Activated CD8-positive, alpha-beta memory T cell treated with anti-CD3 and anti-CD28 coated beads, Interleukin-2, amount 10 ng/mL, durations not matched to agents 7 days and 5 days (primary cell): ENCODE measurements at regions of chr12 and their contacts with region 1.

Region 1: DNA sequence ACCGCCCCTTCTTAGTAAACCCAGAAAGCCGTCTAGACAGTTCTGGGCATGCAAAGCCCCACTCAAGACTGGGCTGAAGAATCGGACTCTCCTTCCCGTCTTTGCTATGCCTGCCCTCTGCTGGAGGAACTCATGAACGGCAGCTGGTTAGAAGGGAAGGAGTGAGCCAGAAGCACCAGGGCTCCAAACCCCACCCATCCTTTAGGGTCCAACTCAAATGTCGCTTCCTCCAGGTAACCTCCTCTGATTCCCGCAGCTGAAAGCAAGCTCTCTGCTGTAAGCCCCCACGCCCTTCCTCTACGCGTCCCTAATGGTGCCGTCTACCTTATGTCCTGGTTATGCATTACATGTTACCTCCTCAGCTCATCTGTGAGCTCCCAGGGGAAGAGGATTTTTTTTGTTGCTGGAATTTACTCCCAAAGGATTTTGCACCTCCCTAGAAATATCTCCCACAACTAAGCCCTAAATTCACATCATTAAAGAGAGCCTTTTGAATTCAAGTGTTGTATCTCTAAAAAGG is 59.0 kb upstream of the SCN8A start:
- DNase-seq: peak; percentile 89
- ATAC-seq: peak; percentile 96
- H3K4me3 Mint-ChIP-seq: no peak overlapping the region
- H3K27ac Mint-ChIP-seq: no peak overlapping the region
- H3K4me1 Mint-ChIP-seq: peaks cover 7% of the 10 kb centered on the region
- H3K27me3 Mint-ChIP-seq: peaks cover 34% of the 10 kb centered on the region

Region 2: GRCh38 chr12:51368640-51369517 is 163.2 kb before region 1 on chr12:
- CTCF ChIA-PET with region 1: interaction called, 13 read pairs
- DNase-seq: peak; percentile 97
- ATAC-seq: peak; percentile 98
- H3K4me3 Mint-ChIP-seq: peak overlapping the region; percentile 28
- H3K27ac Mint-ChIP-seq: peak overlapping the region; percentile 83
- H3K4me1 Mint-ChIP-seq: peaks cover 58% of the 10 kb centered on the region
- H3K27me3 Mint-ChIP-seq: no peaks in the 10 kb centered on the region

Region 3: DNA sequence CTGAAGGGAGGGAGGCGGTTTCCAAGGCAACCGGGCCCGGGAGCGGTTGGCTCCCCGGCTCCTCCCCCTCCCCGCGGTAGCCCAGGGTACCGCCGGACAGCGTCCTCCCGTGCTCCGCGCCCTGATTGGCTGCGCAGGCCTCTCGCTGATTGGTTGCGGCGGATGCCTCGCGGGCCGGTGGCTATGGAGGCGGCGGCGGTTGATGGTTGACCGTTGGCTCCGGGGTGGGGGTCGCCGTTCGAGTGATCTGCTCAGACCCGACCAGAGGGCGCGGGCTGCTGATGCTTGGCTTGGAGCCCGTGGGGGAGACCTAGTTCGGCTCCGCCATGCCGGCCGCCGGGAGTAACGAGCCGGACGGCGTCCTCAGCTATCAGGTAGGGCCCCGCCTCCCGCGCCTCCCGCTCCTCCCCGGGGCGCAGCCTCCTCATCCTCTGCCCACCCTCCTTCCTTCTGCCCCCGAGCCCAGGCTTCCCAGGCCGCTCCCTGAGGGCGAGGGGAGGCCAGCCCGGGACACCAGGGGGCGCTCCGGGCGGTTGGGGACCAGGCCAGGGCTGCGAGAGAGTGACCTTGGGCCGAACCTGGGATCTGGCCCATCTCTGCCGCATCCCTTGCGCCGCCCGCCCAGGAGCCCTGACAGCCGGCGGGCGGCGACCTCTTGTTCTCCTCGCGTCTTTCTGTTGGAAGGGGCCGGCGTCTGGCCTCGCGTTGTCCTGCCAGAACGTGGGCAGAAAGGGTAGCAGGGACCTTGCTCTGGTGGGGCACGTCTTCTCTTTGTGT is 107.2 kb before region 1 on chr12 and contains the start of gene SLC4A8:
- CTCF ChIA-PET with region 1: interaction called, 136 read pairs
- DNase-seq: peak; percentile 91
- ATAC-seq: peak; percentile 94
- H3K4me3 Mint-ChIP-seq: peak within 1 kb of the TSS; percentile 76
- H3K27ac Mint-ChIP-seq: peak within 1 kb of the TSS; percentile 30
- H3K4me1 Mint-ChIP-seq: peaks cover 14% of the 10 kb centered on the region
- H3K27me3 Mint-ChIP-seq: peaks cover 6% of the 10 kb centered on the region
- total RNA-seq, gene SLC4A8: 9.1 to 9.2 TPM

Region 4: DNA sequence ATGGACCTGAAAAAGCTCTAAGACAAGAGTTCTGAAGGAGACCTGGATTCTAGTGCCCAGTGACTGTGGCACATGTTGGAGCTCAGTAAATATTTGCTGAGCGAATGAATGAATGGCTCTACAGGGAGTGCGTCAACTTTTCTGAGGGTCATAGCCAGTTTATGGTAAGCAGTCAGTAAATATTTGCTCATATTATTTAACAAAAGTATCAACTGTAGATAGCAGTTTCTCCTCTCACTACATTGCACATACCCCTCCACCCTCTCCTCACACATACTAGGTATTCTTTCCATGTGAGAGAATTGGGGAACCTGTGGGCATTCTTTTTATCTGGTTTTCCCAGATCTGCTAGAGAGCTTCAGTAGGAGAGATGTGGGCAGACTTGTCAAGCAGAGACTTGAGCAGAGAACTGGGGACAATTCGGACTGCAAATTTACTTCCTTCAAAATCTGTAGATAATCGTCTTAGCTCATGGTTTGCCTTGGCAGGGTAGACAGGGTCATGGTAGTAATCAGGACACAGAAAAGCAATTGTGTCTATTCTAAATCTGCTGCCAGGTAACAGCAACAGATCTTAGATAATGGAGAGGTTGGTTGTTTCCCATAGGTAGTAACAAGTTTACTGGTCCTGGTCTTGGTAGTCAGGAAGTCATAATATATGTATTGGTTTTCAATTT is 101.7 kb before region 1 on chr12:
- CTCF ChIA-PET with region 1: interaction called, 136 read pairs
- DNase-seq: no peak
- ATAC-seq: no peak
- H3K4me3 Mint-ChIP-seq: no peak overlapping the region
- H3K27ac Mint-ChIP-seq: no peak overlapping the region
- H3K4me1 Mint-ChIP-seq: peaks cover 5% of the 10 kb centered on the region
- H3K27me3 Mint-ChIP-seq: peaks cover 14% of the 10 kb centered on the region

Region 5: DNA sequence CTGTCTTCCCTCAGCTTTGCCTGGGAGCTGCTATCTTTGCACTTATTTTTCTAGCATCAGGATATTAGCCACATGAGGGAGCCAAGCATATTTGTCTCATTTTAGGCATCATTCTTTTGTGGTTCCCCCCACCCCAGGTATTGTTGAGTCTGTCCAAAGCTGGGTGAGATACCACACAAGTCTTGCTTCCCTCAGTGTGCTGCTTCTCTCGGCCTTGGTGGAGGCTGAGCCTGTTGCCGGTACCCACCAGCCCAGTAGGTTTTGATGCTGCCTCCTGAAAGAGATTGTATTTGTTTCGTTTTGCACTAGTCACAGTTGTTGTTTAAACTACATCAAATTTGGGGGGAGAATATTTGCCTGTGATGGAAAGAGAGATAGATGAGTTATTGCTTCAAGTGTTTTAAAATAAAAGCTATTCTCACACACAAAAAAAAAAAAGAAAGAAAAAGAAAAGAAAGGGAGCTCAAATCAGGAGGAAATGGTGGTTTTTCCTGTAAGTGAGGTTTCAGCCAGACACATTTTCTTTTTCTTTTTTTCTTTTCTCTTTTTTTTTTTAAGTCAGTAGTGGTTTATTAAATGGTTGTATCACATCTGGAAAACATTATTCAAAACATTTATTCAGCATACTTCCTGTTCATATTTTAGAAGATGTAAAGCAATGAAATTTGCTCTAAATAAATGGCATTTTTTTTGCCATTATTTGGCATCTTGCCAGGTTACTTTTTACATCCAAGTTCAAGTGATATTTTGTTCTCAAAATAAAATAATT is 48.9 kb before region 1 on chr12:
- CTCF ChIA-PET with region 1: interaction called, 14 read pairs
- DNase-seq: peak; percentile 78
- ATAC-seq: peak; percentile 92
- H3K4me3 Mint-ChIP-seq: peak overlapping the region; percentile 69
- H3K27ac Mint-ChIP-seq: peak overlapping the region; percentile 93
- H3K4me1 Mint-ChIP-seq: peaks cover 39% of the 10 kb centered on the region
- H3K27me3 Mint-ChIP-seq: no peaks in the 10 kb centered on the region

Region 6: DNA sequence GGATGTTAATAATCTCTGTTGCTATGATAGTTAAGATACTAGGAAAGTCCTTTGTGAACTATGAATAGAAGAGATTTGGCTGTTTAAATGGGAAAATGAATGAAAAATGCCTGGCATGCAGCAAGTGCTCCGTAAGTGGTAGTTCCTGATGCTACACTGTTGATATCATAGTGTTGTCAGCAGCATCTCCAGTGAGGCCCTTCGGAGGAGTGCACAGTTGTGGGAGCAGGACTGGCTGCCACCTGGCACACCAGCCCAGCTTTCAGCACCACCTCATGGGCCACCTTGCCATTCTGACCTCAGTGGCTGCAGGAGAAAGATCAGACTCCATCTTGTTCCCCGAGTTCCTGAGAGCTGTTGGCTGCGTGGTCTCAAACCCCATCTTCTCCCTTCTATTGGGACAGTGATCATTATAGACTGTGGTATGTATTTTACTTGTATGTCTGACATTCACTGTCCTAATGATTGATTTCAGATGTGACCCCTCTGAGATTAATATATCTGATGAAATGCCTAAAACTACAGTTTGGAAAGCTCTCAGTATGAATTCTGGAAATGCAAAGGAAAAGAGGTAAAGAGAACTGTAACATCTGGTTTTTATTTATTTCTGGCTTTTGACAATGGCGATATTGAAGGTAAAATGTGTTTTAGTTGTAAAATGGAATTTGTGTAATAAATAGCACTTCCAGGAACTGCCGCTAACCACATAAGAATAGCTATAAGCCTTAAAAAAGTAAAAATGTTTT is 26.5 kb before region 1 on chr12:
- CTCF ChIA-PET with region 1: no interaction called
- DNase-seq: no peak
- ATAC-seq: no peak
- H3K4me3 Mint-ChIP-seq: no peak overlapping the region
- H3K27ac Mint-ChIP-seq: no peak overlapping the region
- H3K4me1 Mint-ChIP-seq: no peaks in the 10 kb centered on the region
- H3K27me3 Mint-ChIP-seq: no peaks in the 10 kb centered on the region

Region 7: GRCh38 chr12:51729331-51729730 is 197.3 kb after region 1 on chr12:
- CTCF ChIA-PET with region 1: no interaction called
- DNase-seq: no peak
- ATAC-seq: no peak
- H3K4me3 Mint-ChIP-seq: no peak overlapping the region
- H3K27ac Mint-ChIP-seq: no peak overlapping the region
- H3K4me1 Mint-ChIP-seq: no peaks in the 10 kb centered on the region
- H3K27me3 Mint-ChIP-seq: peaks cover 37% of the 10 kb centered on the region